ENCODE measurements at regions of chr3 and their contacts with region 1.

Region 1: DNA sequence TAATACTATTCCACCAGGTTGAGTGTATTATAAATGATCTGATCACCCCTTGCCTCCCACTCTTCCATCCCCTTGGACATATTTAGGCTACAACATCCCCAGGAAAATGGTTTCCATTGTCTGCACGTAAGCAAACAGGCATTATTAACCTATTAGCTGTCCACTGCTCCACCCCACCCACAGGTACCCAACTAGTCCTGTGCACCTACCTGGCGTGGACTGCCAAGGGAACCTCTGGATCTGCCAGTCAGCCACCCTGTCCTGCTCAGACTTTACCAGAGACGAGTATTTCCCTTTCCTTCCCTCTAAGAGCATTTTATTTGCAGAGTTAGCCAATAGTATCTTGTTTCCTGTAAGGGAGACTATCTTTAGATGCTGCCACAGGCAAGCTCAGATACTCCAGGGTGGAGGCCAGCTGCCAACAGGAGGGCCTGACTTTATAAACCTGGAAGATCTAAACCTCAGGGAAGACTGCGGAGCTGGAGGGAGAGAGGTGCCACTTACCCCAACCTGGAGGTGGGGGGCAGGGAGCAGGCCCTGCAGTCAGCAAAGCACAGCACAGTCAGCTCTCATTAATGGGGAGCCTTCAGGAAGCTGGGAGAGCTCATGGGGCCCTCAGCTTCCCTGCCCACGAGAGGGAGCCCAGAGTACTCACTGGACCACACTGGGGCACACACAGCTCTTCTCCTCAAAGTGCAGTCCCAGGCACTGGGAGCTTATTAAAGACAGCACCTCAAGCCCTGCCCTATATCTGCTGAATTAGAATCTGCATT is at the start of gene CX3CR1:
- DNase-seq: no peak
- CTCF ChIP-seq: no peak

Region 2: DNA sequence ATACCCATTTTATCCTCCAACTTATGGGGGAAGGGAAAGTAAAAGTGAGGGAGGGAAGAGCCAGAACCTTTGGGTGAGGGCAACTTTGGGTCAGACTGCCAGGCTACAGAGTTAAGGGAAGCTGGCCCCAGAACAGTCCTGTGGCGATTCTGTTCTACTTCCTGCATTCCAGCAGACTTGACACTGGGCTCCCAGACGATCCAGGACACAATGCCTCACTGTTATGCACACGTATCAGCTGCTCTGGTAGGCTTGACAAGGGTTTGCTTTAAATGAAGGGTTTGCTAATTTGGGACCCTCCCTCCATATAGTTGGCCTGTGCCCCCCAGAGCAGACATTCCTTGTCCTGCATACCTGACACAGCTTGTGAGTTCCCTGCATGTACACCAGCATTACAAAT is 183.2 kb before region 1 on chr3:
- in situ Hi-C with region 1: loop called (anchors 10 kb)
- DNase-seq: no peak
- CTCF ChIP-seq: no peak

Region 3: GRCh38 chr3:39216176-39216790 is 63.6 kb before region 1 on chr3:
- in situ Hi-C with region 1: loop called (anchors 10 kb)
- DNase-seq: peak; percentile 67
- CTCF ChIP-seq: no peak